AG04450 (cell line): ENCODE measurements at regions of chr15 and their contacts with region 1.

Region 1: DNA sequence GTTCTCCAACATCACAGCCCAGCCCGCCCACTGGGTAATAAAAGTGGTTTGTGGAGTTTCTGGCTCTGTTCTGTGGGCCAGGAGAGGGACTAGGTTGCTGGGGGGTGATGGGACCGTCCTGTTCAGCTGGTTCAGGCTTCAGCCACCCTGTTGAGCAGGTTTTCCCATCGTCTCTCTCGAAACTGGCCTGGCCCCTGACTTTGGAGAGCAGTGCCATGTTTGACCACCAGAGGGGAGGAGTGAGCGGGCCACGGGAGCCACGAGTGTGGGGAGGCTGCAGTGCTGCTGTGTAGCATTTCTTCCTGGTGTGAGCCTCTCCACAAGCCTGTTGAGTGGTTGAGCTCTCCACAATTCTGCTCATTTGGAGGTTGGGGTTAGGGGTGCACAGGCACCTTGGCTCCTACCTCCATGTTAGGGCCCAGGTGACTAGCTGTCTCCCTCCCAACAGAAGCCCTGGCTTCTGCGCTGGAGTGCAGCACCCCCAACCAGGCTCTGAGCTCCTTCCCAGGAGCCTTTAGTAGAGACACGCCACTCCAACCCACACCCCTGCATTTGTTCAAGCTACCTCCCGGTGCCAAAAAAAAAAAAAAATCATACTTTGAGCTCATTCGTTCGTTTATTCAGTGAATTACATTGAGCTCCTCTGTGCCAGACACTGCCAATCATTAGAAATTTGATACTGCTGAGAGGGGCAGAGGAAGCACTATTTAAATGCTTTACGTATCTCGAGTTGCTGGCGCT is 13.9 kb downstream of the SPINT1 start:
- DNase-seq: peak; percentile 30
- H3K4me3 ChIP-seq: no peak overlapping the region
- H3K27ac ChIP-seq: no peak overlapping the region
- H3K27me3 ChIP-seq: peaks cover 20% of the 10 kb centered on the region
- CTCF ChIP-seq: peak; percentile 98

Region 2: DNA sequence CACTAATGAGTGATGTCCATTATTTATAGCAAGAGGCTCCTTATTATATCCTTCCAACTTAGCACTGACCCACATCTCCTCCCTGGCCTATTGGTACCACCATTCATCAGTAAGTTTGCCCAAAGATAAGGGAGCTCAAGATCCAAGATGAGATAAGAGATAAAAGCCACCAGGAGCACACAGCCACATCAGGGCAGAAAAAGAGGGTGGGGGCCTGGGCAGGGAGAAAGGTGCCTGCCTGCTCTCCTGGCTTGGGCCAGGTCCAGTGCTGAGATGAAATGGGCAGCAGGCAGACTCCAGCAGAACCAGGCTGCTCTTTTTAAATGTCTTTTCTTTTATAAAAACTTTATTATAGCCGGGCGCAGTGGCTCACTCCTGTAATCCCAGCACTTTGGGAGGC is 24.8 kb before region 1 on chr15:
- CTCF ChIA-PET with region 1: interaction called, 39 read pairs
- POLR2A ChIA-PET with region 1: no interaction called
- DNase-seq: no peak
- H3K4me3 ChIP-seq: no peak overlapping the region
- H3K27ac ChIP-seq: no peak overlapping the region
- H3K27me3 ChIP-seq: peaks cover 8% of the 10 kb centered on the region
- CTCF ChIP-seq: no peak

Region 3: DNA sequence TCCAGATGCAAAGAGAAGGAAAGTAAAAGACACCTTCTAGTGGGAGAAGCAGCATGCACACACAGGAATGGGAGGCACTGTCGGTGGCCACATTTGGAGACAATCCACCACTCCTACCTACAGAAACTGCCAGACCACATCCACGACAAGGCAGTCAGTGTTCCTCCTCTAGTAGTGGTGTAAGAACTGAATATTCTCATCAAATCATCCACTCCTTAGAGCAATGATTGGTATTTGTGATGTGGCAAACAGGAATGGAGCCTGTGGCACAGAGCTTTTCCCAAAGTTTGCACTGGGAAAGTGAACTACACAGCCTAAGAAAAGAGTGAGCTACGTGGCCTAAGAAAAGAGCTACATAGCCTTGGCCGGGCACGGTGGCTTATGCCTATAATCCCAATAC is 19.0 kb before region 1 on chr15:
- CTCF ChIA-PET with region 1: interaction called, 39 read pairs
- POLR2A ChIA-PET with region 1: no interaction called
- DNase-seq: no peak
- H3K4me3 ChIP-seq: no peak overlapping the region
- H3K27ac ChIP-seq: peak overlapping the region; percentile 39
- H3K27me3 ChIP-seq: peaks cover 15% of the 10 kb centered on the region
- CTCF ChIP-seq: no peak

Region 4: DNA sequence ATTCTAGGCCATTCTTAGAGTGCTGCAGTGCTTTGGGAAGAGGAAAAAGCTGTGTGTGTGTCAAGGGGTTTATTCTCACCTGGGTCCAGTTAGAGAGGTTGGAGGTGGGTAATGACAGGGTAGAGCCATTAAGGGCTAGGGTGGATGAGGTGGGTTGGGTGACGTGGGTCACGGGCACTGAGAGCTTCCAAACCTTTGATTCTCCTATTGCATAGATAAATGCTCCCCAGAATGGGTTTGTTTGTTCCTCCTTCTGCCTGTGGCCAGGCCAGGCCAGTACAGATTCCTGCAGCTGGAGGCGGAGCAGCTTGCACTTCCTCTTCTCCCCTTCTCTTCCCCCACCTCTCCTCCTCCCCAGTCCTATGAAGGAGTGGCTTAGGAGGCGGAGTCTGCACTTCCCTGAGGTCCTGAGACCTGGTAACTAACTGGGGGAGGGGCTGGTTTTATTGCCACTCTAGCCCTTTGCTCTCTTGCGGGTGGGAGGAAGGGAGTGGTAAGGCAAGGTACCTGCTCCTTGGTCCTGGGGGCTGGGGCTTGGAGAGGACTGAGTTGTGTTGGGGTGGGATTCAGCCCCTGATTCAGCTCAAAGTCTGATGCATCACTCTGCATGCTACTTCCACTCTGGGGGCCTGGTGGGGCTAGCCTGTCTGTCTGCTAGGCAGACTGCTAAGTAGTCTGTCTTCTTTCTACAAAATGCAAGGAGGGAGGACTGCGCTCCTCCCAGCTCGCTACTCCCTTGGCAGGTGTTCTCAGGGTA is 10.4 kb before region 1 on chr15:
- CTCF ChIA-PET with region 1: interaction called, 44 read pairs
- POLR2A ChIA-PET with region 1: no interaction called
- DNase-seq: no peak
- H3K4me3 ChIP-seq: no peak overlapping the region
- H3K27ac ChIP-seq: no peak overlapping the region
- H3K27me3 ChIP-seq: peaks cover 43% of the 10 kb centered on the region
- CTCF ChIP-seq: no peak

Region 5: DNA sequence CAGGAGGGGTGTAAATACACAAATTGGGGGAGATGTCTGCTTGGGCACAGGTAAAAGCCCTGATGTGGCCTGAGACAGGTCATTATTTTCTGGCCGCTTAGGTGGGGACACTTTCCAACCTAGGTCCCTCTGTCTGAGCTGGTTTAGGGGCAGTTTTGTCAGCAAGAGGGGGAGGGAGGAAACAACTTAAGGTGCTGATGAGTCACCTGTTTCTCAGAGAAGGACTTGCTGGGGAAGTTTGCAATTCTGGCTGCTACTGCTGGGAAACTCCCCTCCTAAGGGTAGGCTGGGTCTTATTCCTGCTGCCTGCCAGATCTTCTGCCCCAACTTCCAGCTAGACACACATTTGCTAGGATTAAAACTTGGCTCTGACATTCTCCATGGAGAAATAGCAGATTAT is 21.0 kb after region 1 on chr15:
- CTCF ChIA-PET with region 1: interaction called, 171 read pairs
- POLR2A ChIA-PET with region 1: no interaction called
- DNase-seq: no peak
- H3K4me3 ChIP-seq: no peak overlapping the region
- H3K27ac ChIP-seq: no peak overlapping the region
- H3K27me3 ChIP-seq: no peaks in the 10 kb centered on the region
- CTCF ChIP-seq: no peak

Region 6: GRCh38 chr15:41061667-41062066 is 203.9 kb after region 1 on chr15:
- CTCF ChIA-PET with region 1: no interaction called
- POLR2A ChIA-PET with region 1: no interaction called
- DNase-seq: no peak
- H3K4me3 ChIP-seq: no peak overlapping the region
- H3K27ac ChIP-seq: no peak overlapping the region
- H3K27me3 ChIP-seq: no peaks in the 10 kb centered on the region
- CTCF ChIP-seq: no peak